Sigmoid colon (tissue), 7 donors: ENCODE measurements at regions of chr9 and their contacts with region 1.

Region 1: GRCh38 chr9:133149126-133150107 is 14.3 kb downstream of the GBGT1 start:
- DNase-seq: peak; percentile 96
- H3K4me3 ChIP-seq: peak overlapping the region; percentile 26 to 75 (median 62)
- H3K27ac ChIP-seq: peak overlapping the region; percentile 83 to 95 (median 88)
- H3K4me1 ChIP-seq: peaks cover 0 to 35% (median 30%) of the 10 kb centered on the region in 4 donors
- H3K27me3 ChIP-seq: no peaks in the 10 kb centered on the region
- CTCF ChIP-seq: peak; percentile 22 to 31 (median 24)
- EP300 ChIP-seq: peak in 1 of 4 donors; percentile 54
- POLR2A ChIP-seq: peak; percentile 22 to 34

Region 2: GRCh38 chr9:133121198-133121939 is 28.0 kb before region 1 on chr9 and contains the start of gene RALGDS:
- intact Hi-C with region 1: loop called (anchors 2 kb)
- DNase-seq: peak; percentile 95
- H3K4me3 ChIP-seq: peak within 1 kb of the TSS; percentile 65 to 94 (median 82)
- H3K27ac ChIP-seq: peak within 1 kb of the TSS; percentile 89 to 94 (median 93)
- H3K4me1 ChIP-seq: peaks cover 0 to 73% (median 63%) of the 10 kb centered on the region in 4 donors
- H3K27me3 ChIP-seq: no peaks in the 10 kb centered on the region
- CTCF ChIP-seq: no peak
- EP300 ChIP-seq: no peak
- POLR2A ChIP-seq: no peak
- total RNA-seq, gene RALGDS: 35.2 to 52.7 (median 39.6) TPM

Region 3: DNA sequence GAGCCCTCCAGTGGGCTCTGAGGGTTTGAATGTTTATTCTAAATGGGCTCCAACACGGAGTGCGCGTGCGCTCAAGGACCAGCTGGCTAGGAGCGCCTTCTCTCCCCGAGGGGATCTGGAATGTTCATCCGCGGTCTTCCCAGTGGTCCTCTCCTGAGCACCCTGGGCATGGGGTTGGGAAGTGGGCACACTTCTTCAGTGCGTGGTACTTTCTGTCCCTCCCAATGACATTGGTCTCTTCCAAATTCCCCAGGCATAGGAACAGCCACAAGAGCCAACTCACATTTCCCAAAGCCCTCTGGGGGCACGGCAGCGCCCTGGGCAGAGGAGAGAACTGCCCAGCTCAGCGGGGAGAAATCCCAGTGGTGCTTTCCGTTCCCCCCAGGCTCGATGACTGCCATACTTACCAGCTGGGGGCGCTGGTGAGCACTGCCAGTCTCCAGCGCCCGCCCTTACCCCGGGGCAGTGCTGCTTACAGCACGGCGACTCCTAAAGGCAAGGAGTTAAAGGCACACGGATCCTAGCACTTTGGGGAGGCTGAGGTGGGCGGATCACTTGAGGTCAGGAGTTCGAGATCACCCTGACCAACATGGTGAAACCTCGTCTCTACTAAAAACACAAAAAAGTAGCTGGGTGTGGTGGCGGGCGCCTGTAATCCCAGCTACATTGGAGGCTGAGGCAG is 89.6 kb after region 1 on chr9:
- intact Hi-C with region 1: no loop called
- DNase-seq: no peak
- H3K4me3 ChIP-seq: peak overlapping the region in 3 of 4 donors; percentile 7 to 33 (median 32)
- H3K27ac ChIP-seq: peak overlapping the region in 3 of 4 donors; percentile 29 to 71 (median 54)
- H3K4me1 ChIP-seq: peaks cover 0 to 16% (median 11%) of the 10 kb centered on the region in 4 donors
- H3K27me3 ChIP-seq: peaks cover 0 to 27% (median 5%) of the 10 kb centered on the region in 3 donors
- CTCF ChIP-seq: peak; percentile 9 to 62 (median 34)
- EP300 ChIP-seq: no peak
- POLR2A ChIP-seq: no peak

Region 4: GRCh38 chr9:133306242-133307204 is 157.1 kb after region 1 on chr9:
- intact Hi-C with region 1: no loop called
- DNase-seq: no peak
- H3K4me3 ChIP-seq: no peak overlapping the region
- H3K27ac ChIP-seq: no peak overlapping the region
- H3K4me1 ChIP-seq: no peaks in the 10 kb centered on the region
- H3K27me3 ChIP-seq: peaks cover 0 to 7% (median 0%) of the 10 kb centered on the region in 3 donors
- CTCF ChIP-seq: no peak
- EP300 ChIP-seq: no peak
- POLR2A ChIP-seq: no peak